Activated CD8-positive, alpha-beta T cell treated with anti-CD3 and anti-CD28 coated beads, Interleukin-2, amount 10 ng/mL, durations not matched to agents 7 days and 5 days (primary cell): ENCODE measurements at regions of chr12 and their contacts with region 1.

Region 1: GRCh38 chr12:69290545-69291277 is 51.3 kb downstream of the CPSF6 start:
- DNase-seq: peak; percentile 89
- ATAC-seq: peak; percentile 99
- H3K4me3 Mint-ChIP-seq: no peak overlapping the region
- H3K27ac Mint-ChIP-seq: no peak overlapping the region
- H3K4me1 Mint-ChIP-seq: peaks cover 7% of the 10 kb centered on the region
- H3K27me3 Mint-ChIP-seq: peaks cover 42% of the 10 kb centered on the region

Region 2: GRCh38 chr12:69275471-69275891 is 15.2 kb before region 1 on chr12:
- CTCF ChIA-PET with region 1: interaction called, 12 read pairs
- POLR2A ChIA-PET with region 1: no interaction called
- DNase-seq: no peak
- ATAC-seq: peak; percentile 84
- H3K4me3 Mint-ChIP-seq: peak overlapping the region; percentile 36
- H3K27ac Mint-ChIP-seq: peak overlapping the region; percentile 26
- H3K4me1 Mint-ChIP-seq: peaks cover 36% of the 10 kb centered on the region
- H3K27me3 Mint-ChIP-seq: no peaks in the 10 kb centered on the region